Lower leg skin (tissue), 4 donors: ENCODE measurements at regions of chr3 and their contacts with region 1.

Region 1: DNA sequence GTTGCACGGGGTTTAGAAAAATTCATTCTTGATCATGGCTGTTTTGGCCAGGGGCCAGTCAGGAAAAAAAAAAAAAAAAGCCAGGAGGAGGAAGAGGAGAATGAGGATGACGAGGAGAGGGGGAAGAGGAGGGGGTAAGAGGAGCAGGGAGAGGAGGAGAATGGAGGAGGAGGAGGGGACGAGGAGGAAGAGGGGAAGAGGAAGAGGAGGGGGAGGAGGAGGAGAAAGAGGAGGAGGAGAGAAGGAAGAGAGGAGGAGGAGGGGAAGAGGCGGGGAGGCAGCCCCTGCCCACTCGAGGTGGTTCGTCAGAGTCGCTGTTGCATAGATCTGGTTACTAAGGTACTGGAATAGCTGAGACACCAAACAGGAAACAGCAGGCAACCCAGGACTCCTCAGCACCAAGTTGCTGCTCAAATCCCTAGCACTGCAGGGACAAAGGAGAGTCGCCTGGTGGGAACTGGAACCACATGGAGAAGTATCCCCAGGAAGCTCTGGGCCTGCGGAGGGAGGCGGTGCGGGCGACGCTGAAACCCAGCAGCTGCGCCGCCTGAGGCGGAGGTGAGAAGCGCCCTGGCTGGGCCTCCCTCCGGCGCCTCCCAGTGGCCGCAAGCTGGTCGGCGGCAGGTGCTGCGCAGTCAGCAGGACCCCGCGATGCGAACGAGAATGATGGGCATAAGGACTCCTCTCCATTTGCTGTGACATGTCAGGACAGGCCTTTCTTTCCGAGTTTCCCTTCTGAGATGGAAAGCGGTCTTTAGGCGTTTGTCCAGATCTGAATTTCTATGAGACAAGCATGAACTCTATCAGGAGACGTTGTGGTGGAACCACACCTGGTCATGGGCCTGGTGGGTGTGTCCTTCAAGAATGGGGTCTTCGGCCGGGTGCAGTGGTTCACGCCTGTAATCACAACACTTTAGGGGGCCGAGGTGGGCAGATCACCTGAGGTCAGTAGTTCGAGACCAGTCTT is 17.5 kb downstream of the FAM240A start:
- DNase-seq: peak; percentile 70 to 95
- H3K4me3 ChIP-seq: no peak overlapping the region
- CTCF ChIP-seq: peak in 1 of 3 donors; percentile 89
- POLR2A ChIP-seq: no peak

Region 2: DNA sequence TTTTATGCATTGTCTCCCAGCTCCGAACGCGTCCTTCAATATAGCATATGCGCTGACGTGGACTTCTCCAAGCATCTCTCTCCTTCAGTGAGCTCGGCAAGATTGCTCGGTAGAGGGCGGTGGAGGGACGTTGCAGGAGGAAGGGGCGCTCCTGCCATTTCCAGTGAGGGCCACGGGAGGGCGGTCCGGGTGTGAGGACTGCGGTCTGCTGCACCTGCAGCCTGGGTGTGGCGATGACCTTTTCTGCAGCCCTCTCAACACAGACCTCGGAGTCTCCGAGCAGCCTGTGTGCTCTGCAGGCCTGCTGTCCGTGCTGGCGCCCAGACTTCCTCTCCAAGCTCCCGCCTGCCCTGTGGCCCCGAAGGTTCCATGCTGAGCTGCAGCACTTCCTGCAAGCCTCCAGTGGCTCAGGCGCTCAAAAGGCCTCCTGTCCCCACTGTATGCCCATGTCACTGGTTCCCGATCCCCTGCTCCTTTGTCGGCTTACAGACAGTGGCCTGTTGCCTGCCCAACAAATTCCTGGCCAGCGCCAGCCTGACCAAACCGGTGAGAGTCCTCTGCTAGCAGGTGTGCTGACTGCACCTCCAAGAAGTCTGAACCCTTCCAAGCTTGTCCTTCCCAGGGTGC is 141.0 kb before region 1 on chr3:
- intact Hi-C with region 1: loop called (anchors 10 kb)
- DNase-seq: peak; percentile 89 to 97
- H3K4me3 ChIP-seq: no peak overlapping the region
- CTCF ChIP-seq: peak in 1 of 3 donors; percentile 94
- POLR2A ChIP-seq: no peak

Region 3: DNA sequence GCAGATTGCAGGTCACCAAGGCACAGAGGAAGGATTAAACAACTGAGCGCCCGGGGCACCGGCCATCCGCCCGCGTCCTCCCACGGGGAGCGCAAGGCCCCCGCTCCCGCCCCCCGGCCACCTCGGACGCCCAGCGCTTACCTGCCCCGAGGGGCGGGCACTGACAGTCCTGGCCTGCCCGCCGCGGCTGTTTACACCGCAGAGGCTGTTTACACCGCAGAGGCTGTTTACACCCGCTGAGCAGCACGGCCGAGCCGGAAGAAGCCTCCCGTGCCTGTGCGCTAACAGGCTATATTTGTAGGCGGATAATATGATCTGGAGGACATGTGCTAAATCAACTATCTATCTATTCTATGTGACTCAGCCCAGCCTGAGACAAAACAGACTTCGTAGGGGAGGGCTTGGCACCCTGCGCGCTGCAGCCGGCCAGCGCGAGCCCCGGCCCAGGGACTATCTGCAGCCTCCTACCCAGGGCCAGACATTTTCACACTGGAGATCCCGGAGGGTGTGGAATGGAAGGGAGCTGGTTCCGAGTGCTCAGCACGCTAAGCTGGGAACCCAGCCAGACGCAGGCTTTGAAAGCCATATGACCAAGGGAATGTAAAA is 63.7 kb before region 1 on chr3 and contains the start of gene LRRC2:
- intact Hi-C with region 1: no loop called
- DNase-seq: peak; percentile 57 to 87
- H3K4me3 ChIP-seq: peak within 1 kb of the TSS; percentile 43
- CTCF ChIP-seq: no peak
- POLR2A ChIP-seq: no peak
- total RNA-seq, gene LRRC2: 1.0 to 3.5 (median 3.3) TPM